ENCODE measurements at regions of chr2 and their contacts with region 1.

Region 1: GRCh38 chr2:47155091-47155876 is at the start of gene STPG4:
- DNase-seq: no peak
- ATAC-seq: peak; percentile 8; the same call in 2 of the 3 replicates
- H3K4me3 ChIP-seq: no peak within 1 kb of the TSS
- H3K27ac ChIP-seq: no peak within 1 kb of the TSS
- H3K4me1 ChIP-seq: peaks cover 4% of the 10 kb centered on the region in 2 experiments; a peak in 2 of 5 replicates
- H3K27me3 ChIP-seq: no peaks in the 10 kb centered on the region
- CTCF ChIP-seq: no peak
- EP300 ChIP-seq: no peak
- POLR2A ChIP-seq: no peak
- RAD21 ChIP-seq: no peak
- polyA plus RNA-seq, gene STPG4: not detected

Region 2: GRCh38 chr2:47172156-47172921 is 17.1 kb after region 1 on chr2:
- CTCF ChIA-PET with region 1: no interaction called
- POLR2A ChIA-PET with region 1: interaction called, 10 read pairs
- in situ Hi-C with region 1: no loop called
- intact Hi-C with region 1: no loop called
- DNase-seq: no peak
- ATAC-seq: no peak
- H3K4me3 ChIP-seq: no peak overlapping the region
- H3K27ac ChIP-seq: no peak overlapping the region
- H3K4me1 ChIP-seq: peaks cover 7 to 22% of the 10 kb centered on the region in 2 experiments; a peak in 4 of 5 replicates
- H3K27me3 ChIP-seq: no peaks in the 10 kb centered on the region
- CTCF ChIP-seq: no peak
- EP300 ChIP-seq: no peak
- POLR2A ChIP-seq: no peak
- RAD21 ChIP-seq: no peak

Region 3: DNA sequence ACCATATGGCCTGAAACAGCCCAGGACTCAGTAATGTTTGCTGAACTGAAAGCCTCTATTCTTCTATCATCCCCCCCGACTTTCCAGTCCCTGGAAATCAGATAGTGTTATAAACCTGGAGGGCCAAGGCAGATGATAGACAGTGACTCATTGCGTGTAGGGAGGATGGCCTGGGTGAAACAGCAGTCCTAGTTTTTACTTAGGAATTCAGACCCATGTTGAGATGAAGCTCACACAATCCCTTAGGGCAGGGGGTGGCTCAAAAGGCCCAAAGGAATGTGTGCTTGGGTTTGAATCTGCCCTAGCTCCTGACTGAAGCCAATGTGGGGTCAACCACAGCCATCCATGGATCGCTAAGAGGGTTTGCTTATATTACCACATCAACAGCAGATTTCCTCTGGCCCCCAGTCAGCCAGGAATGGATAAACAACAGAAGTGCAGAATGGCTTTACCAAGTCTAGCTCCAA is 43.7 kb after region 1 on chr2:
- CTCF ChIA-PET with region 1: no interaction called
- POLR2A ChIA-PET with region 1: no interaction called
- in situ Hi-C with region 1: no loop called
- intact Hi-C with region 1: no loop called
- DNase-seq: peak; percentile 62 to 83 (median 74)
- ATAC-seq: peak; percentile 87
- H3K4me3 ChIP-seq: no peak overlapping the region
- H3K27ac ChIP-seq: peak overlapping the region; percentile 60; the same call in 2 of the 3 replicates
- H3K4me1 ChIP-seq: peaks cover 8 to 23% of the 10 kb centered on the region in 2 experiments
- H3K27me3 ChIP-seq: no peaks in the 10 kb centered on the region
- CTCF ChIP-seq: no peak
- EP300 ChIP-seq: peak; percentile 72
- POLR2A ChIP-seq: no peak
- RAD21 ChIP-seq: no peak; a peak in 1 of 4 replicates

Region 4: DNA sequence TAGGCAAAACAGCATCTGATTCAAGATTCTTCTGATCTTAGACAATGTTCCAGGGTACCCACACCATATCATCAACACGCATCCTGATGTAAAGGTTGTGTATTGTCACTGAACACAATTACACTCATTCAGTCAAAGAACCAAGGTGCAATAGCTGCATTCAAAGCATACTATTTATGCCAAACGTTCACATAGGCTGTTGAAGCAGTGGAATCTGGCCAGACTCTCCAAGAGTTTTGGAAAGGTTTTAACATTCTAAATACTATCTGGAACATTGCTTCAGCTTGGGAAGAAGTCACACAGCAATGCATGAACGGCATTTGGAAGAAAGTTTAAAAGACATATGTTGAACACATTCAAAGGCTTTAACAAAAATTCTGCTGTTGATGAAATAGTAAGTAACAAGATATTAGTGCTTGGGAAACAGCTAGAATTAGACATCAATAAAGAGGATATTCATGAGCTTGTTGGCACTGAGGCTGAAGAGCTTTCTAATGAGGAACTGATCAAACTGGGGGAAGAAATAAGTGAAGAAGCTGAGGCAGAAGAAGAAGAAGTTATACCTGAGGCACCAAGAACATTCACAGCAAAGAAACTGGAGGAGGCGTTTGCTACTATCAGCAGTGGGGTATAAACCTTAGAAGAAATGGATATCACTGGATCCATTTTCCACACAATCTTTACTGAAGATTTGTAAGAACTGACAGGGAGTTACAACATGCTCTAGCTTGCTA is 580.0 kb after region 1 on chr2:
- CTCF ChIA-PET with region 1: no interaction called
- POLR2A ChIA-PET with region 1: no interaction called
- in situ Hi-C with region 1: no loop called
- intact Hi-C with region 1: no loop called
- DNase-seq: no peak
- ATAC-seq: no peak
- H3K4me3 ChIP-seq: no peak overlapping the region
- H3K27ac ChIP-seq: no peak overlapping the region
- H3K4me1 ChIP-seq: no peaks in the 10 kb centered on the region
- H3K27me3 ChIP-seq: peaks cover 5 to 16% of the 10 kb centered on the region in 2 experiments; a peak in 3 of 5 replicates
- CTCF ChIP-seq: no peak
- EP300 ChIP-seq: no peak
- POLR2A ChIP-seq: no peak
- RAD21 ChIP-seq: no peak